ENCODE measurements at regions of chr19 and their contacts with region 1.

Region 1: GRCh38 chr19:54203151-54203611 is 2.5 kb downstream of the RPS9 start:
- DNase-seq: no peak
- H3K4me3 ChIP-seq: peak overlapping the region; percentile 0 to 86; a peak in 2 of 4 replicates
- H3K27ac ChIP-seq: peak overlapping the region in 1 of 2 experiments; percentile 4; a peak in 1 of 4 replicates
- H3K4me1 ChIP-seq: peaks cover 36 to 37% of the 10 kb centered on the region in 2 experiments
- H3K27me3 ChIP-seq: no peaks in the 10 kb centered on the region
- CTCF ChIP-seq: no peak
- EP300 ChIP-seq: no peak
- RAD21 ChIP-seq: no peak

Region 2: GRCh38 chr19:54189735-54190502 is 13.3 kb before region 1 on chr19:
- CTCF ChIA-PET with region 1: interaction called, 4 read pairs
- POLR2A ChIA-PET with region 1: interaction called, 50 read pairs
- DNase-seq: peak; percentile 87
- H3K4me3 ChIP-seq: peak overlapping the region; percentile 84 to 93
- H3K27ac ChIP-seq: peak overlapping the region; percentile 96 to 97
- H3K4me1 ChIP-seq: peaks cover 0 to 15% of the 10 kb centered on the region in 2 experiments; a peak in 1 of 4 replicates
- H3K27me3 ChIP-seq: no peaks in the 10 kb centered on the region
- CTCF ChIP-seq: no peak
- EP300 ChIP-seq: peak in 1 of 2 experiments; percentile 40; a peak in 1 of 4 replicates
- RAD21 ChIP-seq: no peak

Region 3: DNA sequence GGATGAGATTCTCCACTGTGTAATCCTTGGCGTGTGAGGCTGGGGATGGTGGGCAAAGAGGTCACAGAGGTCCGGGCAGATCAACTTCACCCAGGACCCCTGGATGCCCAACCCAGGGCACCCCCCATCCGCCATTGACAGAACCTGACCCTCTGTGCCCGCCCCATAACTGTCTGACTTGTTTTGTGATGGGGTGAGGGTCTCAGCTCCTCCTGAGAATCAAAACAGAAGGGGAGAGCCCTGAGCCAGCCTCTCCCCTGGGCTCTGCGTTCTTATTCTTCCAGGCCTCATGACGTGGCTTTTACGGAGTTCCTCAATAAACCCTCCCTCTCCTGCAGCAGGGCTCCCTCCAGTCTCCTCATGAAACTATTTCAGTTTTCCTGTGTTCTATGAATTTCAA is 35.9 kb after region 1 on chr19:
- CTCF ChIA-PET with region 1: no interaction called
- POLR2A ChIA-PET with region 1: no interaction called
- DNase-seq: no peak
- H3K4me3 ChIP-seq: no peak overlapping the region
- H3K27ac ChIP-seq: no peak overlapping the region
- H3K4me1 ChIP-seq: no peaks in the 10 kb centered on the region
- H3K27me3 ChIP-seq: peaks cover 38% of the 10 kb centered on the region
- CTCF ChIP-seq: no peak
- EP300 ChIP-seq: no peak
- RAD21 ChIP-seq: no peak

Region 4: DNA sequence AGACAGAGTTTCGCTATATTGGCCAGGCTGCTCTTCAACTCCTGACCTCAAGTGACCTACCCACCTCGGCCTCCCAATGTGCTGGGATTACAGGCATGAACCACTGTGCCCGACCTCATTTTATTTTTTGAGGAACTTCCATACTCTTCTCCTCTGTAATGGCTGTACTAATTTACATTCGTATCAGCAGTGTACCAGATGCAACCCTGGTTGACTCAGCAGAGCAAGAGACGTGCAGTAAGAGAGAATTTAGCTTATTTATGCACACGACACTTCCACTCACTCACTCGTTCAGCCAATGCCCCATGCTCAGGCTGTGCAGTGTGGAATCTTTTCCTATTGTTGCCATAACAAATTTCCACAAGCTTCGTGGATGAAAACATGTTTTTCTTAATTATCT is 528.0 kb after region 1 on chr19:
- CTCF ChIA-PET with region 1: no interaction called
- POLR2A ChIA-PET with region 1: no interaction called
- DNase-seq: no peak
- H3K4me3 ChIP-seq: no peak overlapping the region
- H3K27ac ChIP-seq: no peak overlapping the region
- H3K4me1 ChIP-seq: no peaks in the 10 kb centered on the region
- H3K27me3 ChIP-seq: no peaks in the 10 kb centered on the region
- CTCF ChIP-seq: no peak
- EP300 ChIP-seq: no peak
- RAD21 ChIP-seq: no peak

Measured in SK-N-SH (cell line).